ENCODE measurements at regions of chr3 and their contacts with region 1.

Region 1: GRCh38 chr3:71725279-71725991 is at the start of gene EIF4E3:
- DNase-seq: no peak
- H3K4me3 ChIP-seq: peak within 1 kb of the TSS; percentile 72
- H3K27ac ChIP-seq: no peak within 1 kb of the TSS
- H3K27me3 ChIP-seq: peaks cover 38% of the 10 kb centered on the region
- CTCF ChIP-seq: no peak
- polyA plus RNA-seq, gene EIF4E3: 2.3 and 2.5 TPM in 2 replicates

Region 2: GRCh38 chr3:71579935-71580406 is 145.5 kb before region 1 on chr3:
- CTCF ChIA-PET with region 1: no interaction called
- POLR2A ChIA-PET with region 1: no interaction called
- DNase-seq: no peak
- H3K4me3 ChIP-seq: peak overlapping the region; percentile 87
- H3K27ac ChIP-seq: no peak overlapping the region
- H3K27me3 ChIP-seq: no peaks in the 10 kb centered on the region
- CTCF ChIP-seq: no peak

Region 3: GRCh38 chr3:71690341-71690841 is 35.0 kb before region 1 on chr3:
- CTCF ChIA-PET with region 1: interaction called, 18 read pairs
- POLR2A ChIA-PET with region 1: no interaction called
- DNase-seq: no peak
- H3K4me3 ChIP-seq: peak overlapping the region; percentile 25
- H3K27ac ChIP-seq: peak overlapping the region; percentile 49
- H3K27me3 ChIP-seq: no peaks in the 10 kb centered on the region
- CTCF ChIP-seq: no peak

Region 4: DNA sequence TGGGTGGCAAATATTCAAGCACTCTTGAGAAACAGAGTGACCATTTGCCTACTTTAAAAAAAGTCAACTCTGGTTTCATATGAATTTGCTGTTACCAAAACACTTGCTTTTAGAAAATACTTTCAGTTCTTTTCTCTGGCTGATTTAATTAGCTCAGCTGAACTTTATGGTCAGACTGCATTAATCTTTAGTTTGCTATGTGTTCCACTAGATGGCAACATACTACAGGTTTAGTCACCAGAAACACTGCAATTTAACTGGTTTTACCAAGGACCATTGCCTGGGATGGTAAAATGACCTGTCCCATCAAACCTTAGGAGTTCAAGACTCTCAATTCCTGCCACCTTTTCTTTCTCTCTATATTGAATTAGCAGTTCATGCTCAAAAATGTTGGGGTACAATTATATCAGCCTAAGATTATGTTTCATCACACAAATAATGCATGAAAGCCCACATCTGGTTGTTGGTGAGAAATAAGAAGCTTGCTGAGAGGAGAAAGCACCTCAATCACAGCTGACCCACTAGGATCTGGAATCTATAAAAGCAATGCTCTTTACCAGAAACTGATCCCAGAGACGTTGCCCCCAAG is 14.4 kb before region 1 on chr3:
- CTCF ChIA-PET with region 1: interaction called, 13 read pairs
- POLR2A ChIA-PET with region 1: no interaction called
- DNase-seq: no peak
- H3K4me3 ChIP-seq: no peak overlapping the region
- H3K27ac ChIP-seq: no peak overlapping the region
- H3K27me3 ChIP-seq: peaks cover 13% of the 10 kb centered on the region
- CTCF ChIP-seq: peak; percentile 65

Region 5: GRCh38 chr3:72591522-72592421 is 866.3 kb after region 1 on chr3:
- CTCF ChIA-PET with region 1: no interaction called
- POLR2A ChIA-PET with region 1: no interaction called
- DNase-seq: peak; percentile 15
- H3K4me3 ChIP-seq: no peak overlapping the region
- H3K27ac ChIP-seq: no peak overlapping the region
- H3K27me3 ChIP-seq: peaks cover 2% of the 10 kb centered on the region
- CTCF ChIP-seq: no peak

Measured in AG04450 (cell line).